ENCODE measurements at regions of chr7 and their contacts with region 1.

Region 1: GRCh38 chr7:98251841-98252639 is at the start of gene TECPR1:
- DNase-seq: peak; percentile 93 to 94
- ATAC-seq: peak; percentile 91 to 98 (median 96)
- H3K4me3 ChIP-seq: peak within 1 kb of the TSS; percentile 83
- H3K4me3 Mint-ChIP-seq: peak within 1 kb of the TSS; percentile 94
- H3K27ac ChIP-seq: peak within 1 kb of the TSS; percentile 71
- H3K27ac Mint-ChIP-seq: peak within 1 kb of the TSS; percentile 86 to 99
- H3K4me1 ChIP-seq: peaks cover 42% of the 10 kb centered on the region
- H3K4me1 Mint-ChIP-seq: peaks cover 59 to 62% of the 10 kb centered on the region in 2 donors
- H3K27me3 ChIP-seq: no peaks in the 10 kb centered on the region
- H3K27me3 Mint-ChIP-seq: no peaks in the 10 kb centered on the region
- CTCF ChIP-seq: no peak
- total RNA-seq, gene TECPR1: 68.8 to 76.7 (median 70.3) TPM

Region 2: DNA sequence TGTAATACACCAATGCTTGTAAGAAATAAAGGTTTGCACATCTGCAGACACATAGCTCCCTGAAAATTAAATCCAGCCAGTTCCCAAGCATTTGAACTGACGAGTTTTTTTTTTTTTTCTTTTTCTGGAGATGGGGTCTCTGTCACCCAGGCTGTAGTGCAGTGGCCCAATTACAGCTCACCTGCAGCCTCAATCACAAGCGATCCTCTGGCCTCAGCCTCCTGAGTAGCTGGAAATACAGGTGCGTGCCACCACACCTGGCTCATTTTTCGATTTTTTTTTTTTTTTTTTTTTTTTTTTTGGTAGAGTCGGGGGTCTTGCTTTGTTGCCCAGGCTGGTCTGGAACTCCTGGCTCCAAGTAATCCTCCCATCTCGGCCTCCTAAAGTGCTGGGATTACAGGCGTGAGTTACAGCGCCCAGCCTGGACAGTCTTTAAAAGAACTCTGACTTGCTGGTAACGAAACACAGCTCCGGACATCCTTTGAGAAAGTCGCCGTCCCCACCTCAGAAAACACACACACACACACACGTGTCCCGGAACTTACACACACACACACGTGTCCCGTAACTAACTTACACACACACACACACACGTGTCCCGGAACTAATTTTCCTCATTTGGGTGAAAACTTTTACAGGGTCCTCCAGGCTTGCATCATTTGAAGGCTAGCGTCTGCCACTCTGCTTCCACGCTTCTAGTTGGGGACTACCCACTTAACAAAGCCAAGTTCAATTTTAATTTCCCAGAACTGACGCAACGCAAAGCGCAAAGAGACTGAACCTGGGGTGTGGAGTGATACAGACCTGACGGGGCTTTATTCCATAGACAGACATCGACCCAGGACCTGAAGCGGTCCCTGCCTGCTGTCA is 280.7 kb before region 1 on chr7:
- intact Hi-C with region 1: no loop called
- DNase-seq: peak in 1 of 2 donors; percentile 59
- ATAC-seq: peak; percentile 55 to 69 (median 64)
- H3K4me3 ChIP-seq: peak overlapping the region; percentile 82
- H3K4me3 Mint-ChIP-seq: peak overlapping the region; percentile 95
- H3K27ac ChIP-seq: peak overlapping the region; percentile 55
- H3K27ac Mint-ChIP-seq: peak overlapping the region; percentile 86 to 94
- H3K4me1 ChIP-seq: peaks cover 17% of the 10 kb centered on the region
- H3K4me1 Mint-ChIP-seq: peaks cover 6 to 18% of the 10 kb centered on the region in 2 donors
- H3K27me3 ChIP-seq: no peaks in the 10 kb centered on the region
- H3K27me3 Mint-ChIP-seq: no peaks in the 10 kb centered on the region
- CTCF ChIP-seq: no peak

Region 3: GRCh38 chr7:98054585-98054984 is 197.5 kb before region 1 on chr7:
- intact Hi-C with region 1: no loop called
- DNase-seq: no peak
- ATAC-seq: no peak
- H3K4me3 ChIP-seq: no peak overlapping the region
- H3K4me3 Mint-ChIP-seq: no peak overlapping the region
- H3K27ac ChIP-seq: no peak overlapping the region
- H3K27ac Mint-ChIP-seq: no peak overlapping the region
- H3K4me1 ChIP-seq: peaks cover 6% of the 10 kb centered on the region
- H3K4me1 Mint-ChIP-seq: peaks cover 0 to 5% of the 10 kb centered on the region in 2 donors
- H3K27me3 ChIP-seq: no peaks in the 10 kb centered on the region
- H3K27me3 Mint-ChIP-seq: peaks cover 3 to 15% of the 10 kb centered on the region in 2 donors
- CTCF ChIP-seq: no peak

Region 4: DNA sequence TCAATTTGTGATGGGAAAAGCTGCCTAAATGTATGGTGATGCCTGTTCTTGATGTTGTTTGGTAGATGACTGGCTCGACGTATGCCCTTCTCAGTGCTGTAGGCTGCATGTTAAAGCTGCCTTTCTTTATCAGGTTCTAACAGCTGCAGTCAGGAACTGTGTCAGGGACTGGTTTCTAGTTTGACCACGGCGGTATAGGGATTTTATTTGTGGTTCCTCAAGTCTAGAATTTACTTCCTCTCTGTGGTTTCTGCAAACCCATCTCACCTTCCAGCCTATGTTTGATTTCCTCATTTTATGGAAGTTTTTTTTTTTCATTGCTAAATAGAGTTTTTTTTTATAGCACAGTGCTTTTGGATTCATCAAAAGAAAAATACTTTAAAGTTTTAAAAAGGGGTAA is 118.9 kb before region 1 on chr7:
- intact Hi-C with region 1: loop called (anchors 10 kb)
- DNase-seq: peak; percentile 20 to 66
- ATAC-seq: peak; percentile 45 to 63 (median 61)
- H3K4me3 ChIP-seq: no peak overlapping the region
- H3K4me3 Mint-ChIP-seq: peak overlapping the region; percentile 70
- H3K27ac ChIP-seq: no peak overlapping the region
- H3K27ac Mint-ChIP-seq: peak overlapping the region; percentile 72 to 87
- H3K4me1 ChIP-seq: peaks cover 32% of the 10 kb centered on the region
- H3K4me1 Mint-ChIP-seq: peaks cover 51 to 63% of the 10 kb centered on the region in 2 donors
- H3K27me3 ChIP-seq: peaks cover 2% of the 10 kb centered on the region
- H3K27me3 Mint-ChIP-seq: peaks cover 25 to 33% of the 10 kb centered on the region in 2 donors
- CTCF ChIP-seq: no peak

Region 5: GRCh38 chr7:98280791-98281756 is 29.0 kb after region 1 on chr7 and contains the start of gene BRI3:
- intact Hi-C with region 1: loop called (anchors 2 kb)
- DNase-seq: peak; percentile 84 to 94
- ATAC-seq: peak; percentile 81 to 93 (median 85)
- H3K4me3 ChIP-seq: peak within 1 kb of the TSS; percentile 60
- H3K4me3 Mint-ChIP-seq: peak within 1 kb of the TSS; percentile 88
- H3K27ac ChIP-seq: peak within 1 kb of the TSS; percentile 61
- H3K27ac Mint-ChIP-seq: peak within 1 kb of the TSS; percentile 74 to 87
- H3K4me1 ChIP-seq: peaks cover 49% of the 10 kb centered on the region
- H3K4me1 Mint-ChIP-seq: peaks cover 22 to 33% of the 10 kb centered on the region in 2 donors
- H3K27me3 ChIP-seq: no peaks in the 10 kb centered on the region
- H3K27me3 Mint-ChIP-seq: no peaks in the 10 kb centered on the region
- CTCF ChIP-seq: no peak
- total RNA-seq, gene BRI3: 81.9 to 97.1 (median 90.0) TPM

Region 6: GRCh38 chr7:98291717-98292116 is 39.7 kb after region 1 on chr7:
- intact Hi-C with region 1: no loop called
- DNase-seq: no peak
- ATAC-seq: peak in 1 of 3 donors; percentile 24
- H3K4me3 ChIP-seq: no peak overlapping the region
- H3K4me3 Mint-ChIP-seq: no peak overlapping the region
- H3K27ac ChIP-seq: no peak overlapping the region
- H3K27ac Mint-ChIP-seq: no peak overlapping the region
- H3K4me1 ChIP-seq: peaks cover 13% of the 10 kb centered on the region
- H3K4me1 Mint-ChIP-seq: no peaks in the 10 kb centered on the region
- H3K27me3 ChIP-seq: no peaks in the 10 kb centered on the region
- H3K27me3 Mint-ChIP-seq: no peaks in the 10 kb centered on the region
- CTCF ChIP-seq: no peak